Activated T-helper 2 cell treated with anti-CD3 and anti-CD28 coated beads, Interferon-gamma antibody, Interleukin-2, Interleukin-4, amounts not matched to agents 10 μg/mL and 5 μg/mL and 100 μg/mL, durations not matched to agents 14 hours and 24 hours and 36 hours (primary cell): ENCODE measurements at regions of chr4 and their contacts with region 1.

Region 1: GRCh38 chr4:140103676-140104075 is 50.3 kb downstream of the MAML3 start:
- DNase-seq: peak; percentile 42
- H3K4me3 Mint-ChIP-seq: no peak overlapping the region
- H3K27ac Mint-ChIP-seq: peak overlapping the region; percentile 54
- H3K4me1 Mint-ChIP-seq: peaks cover 66% of the 10 kb centered on the region
- H3K27me3 Mint-ChIP-seq: peaks cover 3% of the 10 kb centered on the region

Region 2: DNA sequence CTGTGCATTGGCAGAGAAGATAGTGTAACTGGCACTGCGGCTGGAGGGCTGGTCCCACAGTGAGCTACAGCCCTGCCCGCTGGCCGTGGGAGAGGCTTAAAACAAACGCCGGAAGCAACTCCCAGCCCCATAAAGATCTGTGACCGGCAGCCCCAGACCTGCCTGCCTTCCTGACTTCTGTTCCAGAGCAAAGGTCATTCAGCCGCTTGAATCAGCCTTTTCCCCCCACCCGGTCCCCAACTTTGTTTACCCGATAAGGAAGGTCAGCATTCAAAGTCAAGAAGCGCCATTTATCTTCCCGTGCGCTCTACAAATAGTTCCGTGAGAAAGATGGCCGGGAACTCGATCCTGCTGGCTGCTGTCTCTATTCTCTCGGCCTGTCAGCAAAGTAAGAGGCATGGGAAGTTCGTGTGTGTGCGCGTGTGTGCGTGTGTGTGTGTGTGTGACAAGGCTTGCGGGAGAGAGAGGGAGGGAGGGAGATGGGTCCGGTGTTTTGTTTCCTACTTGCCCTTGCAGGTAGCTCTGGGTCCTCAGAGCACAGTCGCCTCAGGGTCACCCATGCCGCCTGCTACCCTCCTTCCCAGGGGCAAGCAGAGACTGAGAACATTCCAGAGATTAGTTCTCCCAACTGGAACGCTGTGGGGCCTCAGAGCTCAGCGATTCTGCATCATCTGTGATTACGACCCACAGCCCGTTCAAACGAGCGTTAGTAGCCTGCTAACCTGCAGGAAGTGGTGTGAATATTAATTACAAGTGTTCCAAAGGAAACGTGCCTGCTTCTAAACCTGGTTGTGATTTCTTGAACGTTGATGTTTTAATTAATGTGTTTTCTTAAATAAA is 437.8 kb before region 1 on chr4 and contains the start of gene MGST2:
- intact Hi-C with region 1: loop called (anchors 5 kb)
- DNase-seq: peak; percentile 25
- H3K4me3 Mint-ChIP-seq: peak within 1 kb of the TSS; percentile 84
- H3K27ac Mint-ChIP-seq: peak within 1 kb of the TSS; percentile 87
- H3K4me1 Mint-ChIP-seq: peaks cover 33% of the 10 kb centered on the region
- H3K27me3 Mint-ChIP-seq: no peaks in the 10 kb centered on the region
- total RNA-seq, gene MGST2: 29.5 and 32.5 TPM in 2 replicates

Region 3: DNA sequence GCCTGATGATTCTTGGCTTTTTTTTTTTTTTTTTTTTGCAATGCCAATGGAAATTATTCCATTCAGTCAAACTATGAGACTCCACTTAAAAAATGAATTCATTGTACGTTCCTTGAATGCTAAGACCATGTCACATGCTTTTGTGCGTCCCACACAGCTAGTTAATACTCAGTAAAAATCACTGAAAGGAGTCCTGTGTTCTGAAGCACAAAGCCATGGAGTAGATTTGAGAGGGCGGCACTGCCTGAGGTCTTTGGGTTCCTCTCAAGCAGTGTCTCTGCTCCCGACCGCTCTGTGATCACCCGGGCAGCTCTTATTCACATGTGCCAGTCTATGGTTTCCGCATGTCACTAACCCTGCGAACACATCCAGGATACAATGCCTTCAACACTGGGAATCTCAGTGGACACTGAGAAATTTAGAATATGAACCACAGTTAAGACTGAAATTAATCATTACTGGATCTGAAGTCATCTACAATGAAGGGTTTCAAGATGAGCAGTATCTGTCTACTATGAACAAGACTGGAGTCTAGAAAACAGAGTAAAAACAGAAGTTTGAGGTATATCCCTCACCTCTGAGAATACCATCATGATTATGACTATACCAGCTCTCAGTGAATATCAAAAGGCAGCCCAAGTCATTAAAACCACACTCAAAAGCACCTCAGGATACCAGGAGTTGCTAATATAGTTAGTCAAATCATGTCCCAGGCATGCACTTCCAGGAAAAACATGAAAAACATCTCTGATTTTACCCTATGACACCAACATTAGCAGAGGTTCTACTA is 245.0 kb before region 1 on chr4:
- intact Hi-C with region 1: loop called (anchors 2 kb)
- DNase-seq: no peak
- H3K4me3 Mint-ChIP-seq: no peak overlapping the region
- H3K27ac Mint-ChIP-seq: peak overlapping the region; percentile 61
- H3K4me1 Mint-ChIP-seq: peaks cover 41% of the 10 kb centered on the region
- H3K27me3 Mint-ChIP-seq: peaks cover 26% of the 10 kb centered on the region

Region 4: DNA sequence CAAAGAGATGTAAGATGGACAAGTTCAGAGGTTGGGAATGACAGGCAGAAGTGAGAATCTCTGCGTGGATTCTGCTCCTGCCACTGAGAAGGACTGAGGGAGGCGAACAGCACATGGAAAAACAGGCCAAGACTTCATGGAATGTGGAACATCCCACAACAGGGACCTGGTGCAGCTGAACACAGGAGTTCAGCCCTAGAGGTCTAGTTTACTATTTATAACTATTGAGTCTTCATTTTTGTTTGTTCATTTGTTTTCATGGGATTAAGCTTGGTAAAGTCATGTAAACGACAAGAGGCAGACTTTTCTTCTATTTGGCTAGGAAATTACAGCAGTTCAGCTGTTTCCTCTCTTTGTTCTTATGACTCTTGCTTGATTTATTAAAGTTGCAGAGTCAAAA is 184.2 kb before region 1 on chr4:
- intact Hi-C with region 1: no loop called
- DNase-seq: no peak
- H3K4me3 Mint-ChIP-seq: no peak overlapping the region
- H3K27ac Mint-ChIP-seq: no peak overlapping the region
- H3K4me1 Mint-ChIP-seq: no peaks in the 10 kb centered on the region
- H3K27me3 Mint-ChIP-seq: peaks cover 36% of the 10 kb centered on the region

Region 5: GRCh38 chr4:140085062-140085622 is 18.5 kb before region 1 on chr4:
- intact Hi-C with region 1: loop called (anchors 1 kb)
- DNase-seq: no peak
- H3K4me3 Mint-ChIP-seq: no peak overlapping the region
- H3K27ac Mint-ChIP-seq: no peak overlapping the region
- H3K4me1 Mint-ChIP-seq: peaks cover 44% of the 10 kb centered on the region
- H3K27me3 Mint-ChIP-seq: peaks cover 5% of the 10 kb centered on the region

Region 6: DNA sequence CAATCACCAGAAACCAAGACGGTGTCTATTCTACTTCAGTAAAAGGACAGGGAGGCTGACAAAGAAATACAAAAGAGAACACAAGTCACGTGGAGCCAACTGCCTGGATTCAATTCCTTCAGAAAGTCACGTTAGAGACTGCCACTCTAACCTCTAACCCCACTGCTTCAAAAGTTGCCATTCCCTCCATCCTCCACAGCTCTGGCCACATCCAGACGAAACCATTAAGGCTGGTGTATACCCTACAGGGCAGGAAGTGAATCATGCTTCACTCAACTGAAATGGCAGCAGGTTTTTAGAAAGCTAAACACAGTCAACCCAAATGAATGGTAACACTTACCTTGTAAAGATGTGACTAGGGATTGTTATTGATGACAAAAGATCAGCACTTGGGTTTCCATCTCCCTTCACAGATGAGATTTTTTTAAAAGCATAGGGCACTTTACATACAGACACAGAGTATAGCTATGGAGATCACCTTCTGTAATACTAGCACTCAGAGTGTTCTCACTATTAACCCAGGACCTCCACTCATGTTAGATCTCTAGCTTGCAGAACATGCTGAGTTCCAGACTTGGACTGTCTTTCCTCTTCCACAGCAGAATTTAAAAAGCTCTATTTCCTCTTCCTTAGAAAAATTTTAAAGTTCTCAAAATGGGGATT is 12.9 kb after region 1 on chr4:
- intact Hi-C with region 1: loop called (anchors 1 kb)
- DNase-seq: peak; percentile 28
- H3K4me3 Mint-ChIP-seq: no peak overlapping the region
- H3K27ac Mint-ChIP-seq: peak overlapping the region; percentile 46
- H3K4me1 Mint-ChIP-seq: peaks cover 43% of the 10 kb centered on the region
- H3K27me3 Mint-ChIP-seq: peaks cover 13% of the 10 kb centered on the region